ENCODE measurements at regions of chr1 and their contacts with region 1.

Region 1: GRCh38 chr1:41366455-41367287 is 5.4 kb downstream of the FOXO6 start:
- DNase-seq: peak in 1 of 2 experiments; percentile 37
- H3K4me3 ChIP-seq: peak overlapping the region; percentile 58
- H3K27ac ChIP-seq: no peak overlapping the region
- H3K4me1 ChIP-seq: peaks cover 41% of the 10 kb centered on the region
- H3K27me3 ChIP-seq: peaks cover 7% of the 10 kb centered on the region; the same call in 1 of the 2 replicates
- CTCF ChIP-seq: no peak

Region 2: DNA sequence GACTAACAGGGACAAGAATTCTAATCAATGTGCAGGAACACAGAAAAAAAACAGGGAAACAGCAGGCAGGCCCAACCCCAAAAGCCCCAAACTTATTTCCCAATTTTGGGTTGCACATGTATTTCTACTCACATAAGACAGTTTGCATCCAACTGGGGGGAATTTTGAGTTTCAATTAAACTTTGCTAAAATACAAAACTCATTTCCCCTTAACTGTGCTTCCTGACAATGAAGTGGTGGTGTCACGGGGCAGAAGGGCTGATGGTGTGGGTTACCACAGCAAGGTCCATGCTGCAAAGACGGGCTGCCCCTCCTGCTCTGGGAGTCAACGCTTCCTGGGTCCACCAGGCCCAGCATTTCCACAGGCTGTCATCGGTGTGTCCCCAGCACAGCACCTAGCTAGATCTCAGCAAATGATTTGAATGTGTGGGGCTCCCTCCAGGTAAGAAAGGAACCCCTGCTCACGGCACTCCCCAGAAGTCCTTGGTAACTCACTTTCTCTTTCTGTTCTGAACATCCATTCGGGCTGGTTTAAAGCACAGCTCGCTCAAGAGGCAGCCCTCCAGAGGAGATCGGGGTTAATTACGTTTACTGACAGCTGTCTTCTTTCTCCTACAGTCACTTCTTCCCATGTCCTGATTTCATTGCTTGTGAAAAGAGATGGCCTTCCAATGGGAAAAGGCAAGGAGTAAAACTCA is 524.7 kb after region 1 on chr1:
- CTCF ChIA-PET with region 1: interaction called, 10 read pairs
- POLR2A ChIA-PET with region 1: no interaction called
- intact Hi-C with region 1: no loop called
- DNase-seq: peak in 1 of 2 experiments; percentile 47
- H3K4me3 ChIP-seq: no peak overlapping the region
- H3K27ac ChIP-seq: peak overlapping the region; percentile 40
- H3K4me1 ChIP-seq: peaks cover 35% of the 10 kb centered on the region
- H3K27me3 ChIP-seq: no peaks in the 10 kb centered on the region
- CTCF ChIP-seq: no peak

Region 3: DNA sequence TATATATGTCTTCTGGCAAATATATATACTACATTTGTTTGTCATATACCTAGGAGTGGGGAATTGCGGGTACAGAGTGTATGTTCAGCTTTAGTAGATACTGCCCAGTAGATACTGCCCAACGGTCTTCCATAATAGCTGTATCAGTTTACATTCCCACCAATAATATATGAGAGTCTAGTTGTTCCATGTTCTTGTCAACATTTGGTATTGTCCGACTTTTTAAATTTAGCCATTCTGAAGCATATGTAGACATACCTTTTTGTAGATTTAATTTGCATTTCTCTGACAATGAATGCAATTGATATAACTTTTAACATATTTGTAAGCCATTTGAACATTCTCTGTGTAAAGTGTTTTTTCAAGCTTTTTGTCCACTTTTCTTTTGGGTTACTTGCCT is 651.1 kb after region 1 on chr1:
- CTCF ChIA-PET with region 1: no interaction called
- POLR2A ChIA-PET with region 1: interaction called, 15 read pairs
- intact Hi-C with region 1: no loop called
- DNase-seq: no peak
- H3K4me3 ChIP-seq: no peak overlapping the region
- H3K27ac ChIP-seq: no peak overlapping the region
- H3K4me1 ChIP-seq: no peaks in the 10 kb centered on the region
- H3K27me3 ChIP-seq: no peaks in the 10 kb centered on the region
- CTCF ChIP-seq: no peak

Measured in PC-9 (cell line).